WTC11 (cell line): ENCODE measurements at regions of chr17 and their contacts with region 1.

Region 1: DNA sequence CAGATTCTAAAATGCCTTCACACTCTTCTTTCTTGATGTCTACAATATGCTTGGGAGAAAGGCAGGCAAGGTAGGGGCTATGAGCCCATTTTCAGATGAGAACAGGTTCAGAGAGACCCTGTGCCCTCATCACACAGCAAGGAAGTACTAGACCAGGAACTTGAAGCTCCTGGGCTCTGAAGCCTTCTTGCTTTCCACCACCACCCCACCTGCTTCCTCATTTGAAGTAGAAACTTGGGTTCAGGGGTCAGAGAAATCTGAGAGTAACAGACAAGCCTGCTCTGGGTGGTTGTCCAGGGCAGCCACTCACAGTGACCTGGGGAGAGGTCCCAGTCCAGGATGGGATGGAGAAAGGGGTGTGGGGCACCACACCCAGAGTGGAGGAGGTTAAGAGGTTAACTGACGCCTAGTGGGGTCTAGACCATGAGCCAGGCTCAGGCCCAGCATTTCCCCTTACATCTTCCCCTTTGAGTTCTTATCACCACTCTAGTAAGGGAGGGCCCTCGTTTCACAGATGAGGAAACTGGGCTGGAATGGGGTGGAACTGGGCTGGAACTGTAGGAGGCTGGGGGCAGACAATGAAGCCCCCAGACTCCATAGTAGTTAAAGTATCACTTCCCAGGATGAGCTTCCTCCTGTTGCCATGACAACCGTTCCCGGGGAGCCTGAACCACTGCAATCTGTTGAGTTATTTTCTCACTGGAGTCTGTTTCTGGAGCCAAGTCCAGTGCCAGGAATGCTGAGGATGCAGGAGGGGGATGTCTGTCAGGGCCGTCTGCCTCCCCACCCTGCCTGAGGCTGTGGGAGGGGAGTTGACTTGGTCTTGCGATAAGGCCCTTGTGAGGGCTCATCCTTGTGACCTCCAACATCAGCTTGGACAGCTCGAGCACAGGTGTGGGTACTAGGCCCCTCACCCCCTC is 16.2 kb upstream of the PHF12 start:
- DNase-seq: no peak
- ATAC-seq: no peak
- H3K4me3 Mint-ChIP-seq: no peak overlapping the region
- H3K27ac Mint-ChIP-seq: 0 out of 2 replicates have a peak overlapping the region, but pooled peaks have one; percentile 14
- H3K4me1 Mint-ChIP-seq: peaks cover 43% of the 10 kb centered on the region
- H3K27me3 Mint-ChIP-seq: no peaks in the 10 kb centered on the region; the same call in 1 of the 2 replicates
- CTCF ChIP-seq: no peak

Region 2: GRCh38 chr17:29005936-29006511 is 38.5 kb after region 1 on chr17 and contains the start of gene SEZ6:
- CTCF ChIA-PET with region 1: interaction called, 22 read pairs
- POLR2A ChIA-PET with region 1: interaction called, 3 read pairs
- DNase-seq: peak; percentile 91
- ATAC-seq: peak; percentile 63
- H3K4me3 Mint-ChIP-seq: peak within 1 kb of the TSS; percentile 69
- H3K27ac Mint-ChIP-seq: no peak within 1 kb of the TSS
- H3K4me1 Mint-ChIP-seq: peaks cover 76% of the 10 kb centered on the region
- H3K27me3 Mint-ChIP-seq: peaks cover 50% of the 10 kb centered on the region
- CTCF ChIP-seq: no peak
- total RNA-seq, gene SEZ6: 1.4 to 3.0 TPM (median 1.6 TPM) in 3 replicates

Region 3: GRCh38 chr17:29042679-29043538 is 75.4 kb after region 1 on chr17 and contains the start of gene PIPOX:
- CTCF ChIA-PET with region 1: interaction called, 19 read pairs
- POLR2A ChIA-PET with region 1: no interaction called
- DNase-seq: peak; percentile 80
- ATAC-seq: peak; percentile 87
- H3K4me3 Mint-ChIP-seq: peak within 1 kb of the TSS; percentile 41
- H3K27ac Mint-ChIP-seq: peak within 1 kb of the TSS; percentile 98
- H3K4me1 Mint-ChIP-seq: peaks cover 63% of the 10 kb centered on the region
- H3K27me3 Mint-ChIP-seq: no peaks in the 10 kb centered on the region
- CTCF ChIP-seq: no peak
- total RNA-seq, gene PIPOX: 32.4 to 34.2 TPM (median 34.1 TPM) in 3 replicates

Region 4: GRCh38 chr17:29069526-29070041 is 102.1 kb after region 1 on chr17:
- CTCF ChIA-PET with region 1: interaction called, 17 read pairs
- POLR2A ChIA-PET with region 1: no interaction called
- DNase-seq: peak; percentile 61
- ATAC-seq: peak; percentile 56
- H3K4me3 Mint-ChIP-seq: no peak overlapping the region
- H3K27ac Mint-ChIP-seq: no peak overlapping the region
- H3K4me1 Mint-ChIP-seq: peaks cover 45% of the 10 kb centered on the region
- H3K27me3 Mint-ChIP-seq: peaks cover 12% of the 10 kb centered on the region
- CTCF ChIP-seq: no peak

Region 5: GRCh38 chr17:29102741-29103181 is 135.3 kb after region 1 on chr17:
- CTCF ChIA-PET with region 1: interaction called, 762 read pairs
- POLR2A ChIA-PET with region 1: no interaction called
- DNase-seq: no peak
- ATAC-seq: no peak
- H3K4me3 Mint-ChIP-seq: no peak overlapping the region
- H3K27ac Mint-ChIP-seq: no peak overlapping the region
- H3K4me1 Mint-ChIP-seq: peaks cover 10% of the 10 kb centered on the region
- H3K27me3 Mint-ChIP-seq: no peaks in the 10 kb centered on the region
- CTCF ChIP-seq: no peak